ENCODE measurements at regions of chrX and their contacts with region 1.

Region 1: GRCh38 chrX:10169175-10169574 is 12.4 kb downstream of the CLCN4 start:
- DNase-seq: peak; percentile 61 to 63
- H3K4me3 ChIP-seq: no peak overlapping the region
- H3K4me3 Mint-ChIP-seq: peak overlapping the region; percentile 50
- H3K27ac Mint-ChIP-seq: peak overlapping the region; percentile 71
- H3K4me1 ChIP-seq: peaks cover 18% of the 10 kb centered on the region
- H3K4me1 Mint-ChIP-seq: peaks cover 23% of the 10 kb centered on the region
- H3K27me3 ChIP-seq: no peaks in the 10 kb centered on the region
- H3K27me3 Mint-ChIP-seq: no peaks in the 10 kb centered on the region
- CTCF ChIP-seq: no peak

Region 2: GRCh38 chrX:10133980-10134676 is 35.0 kb before region 1 on chrX:
- CTCF ChIA-PET with region 1: no interaction called
- POLR2A ChIA-PET with region 1: no interaction called
- intact Hi-C with region 1: loop called (anchors 1 kb)
- DNase-seq: peak; percentile 67 to 68
- H3K4me3 ChIP-seq: no peak overlapping the region; the same call in 1 of the 2 replicates
- H3K4me3 Mint-ChIP-seq: peak overlapping the region; percentile 50
- H3K27ac Mint-ChIP-seq: peak overlapping the region; percentile 91
- H3K4me1 ChIP-seq: peaks cover 16% of the 10 kb centered on the region
- H3K4me1 Mint-ChIP-seq: no peaks in the 10 kb centered on the region
- H3K27me3 ChIP-seq: no peaks in the 10 kb centered on the region
- H3K27me3 Mint-ChIP-seq: no peaks in the 10 kb centered on the region
- CTCF ChIP-seq: no peak

Region 3: DNA sequence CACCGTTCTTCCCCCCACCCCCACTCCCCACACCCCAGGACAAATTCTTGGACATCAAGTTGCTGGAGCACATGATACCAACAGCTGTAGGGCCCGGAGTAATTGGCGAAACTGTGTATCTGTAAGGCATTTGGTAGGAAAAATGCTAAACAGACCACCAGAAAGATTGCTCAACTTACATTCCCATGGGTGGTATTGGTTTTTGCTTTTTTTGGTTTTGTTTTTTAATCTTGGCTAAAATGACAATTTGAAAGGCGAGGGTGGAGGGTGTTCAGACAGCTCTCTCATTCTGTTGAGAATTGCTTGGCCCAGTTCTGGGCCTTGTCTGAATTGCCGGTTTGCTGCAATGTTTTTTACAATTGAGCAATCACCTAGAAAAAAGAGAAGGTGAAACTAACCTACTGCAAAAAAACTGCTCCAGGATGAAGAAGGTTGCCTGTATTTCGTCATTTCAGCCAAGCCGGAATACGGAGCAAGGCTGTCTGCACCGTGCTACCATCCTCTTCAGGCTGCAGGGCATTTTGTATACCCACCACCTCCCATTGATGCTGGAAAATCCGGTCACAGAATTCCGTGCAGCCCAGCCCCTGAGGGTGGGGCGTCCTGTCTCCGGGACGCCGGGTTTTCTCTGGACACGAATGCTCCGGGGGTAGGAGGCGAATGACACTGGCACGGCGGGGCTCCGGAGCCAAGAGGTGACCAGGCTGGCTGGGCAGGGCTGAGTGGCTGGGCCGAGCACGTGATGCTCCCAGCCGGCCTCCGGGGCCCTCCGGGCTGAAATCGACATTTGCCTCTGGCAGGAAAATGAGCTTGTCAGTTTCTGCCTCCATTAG is 12.8 kb before region 1 on chrX and contains the start of gene CLCN4:
- CTCF ChIA-PET with region 1: interaction called, 3 read pairs
- POLR2A ChIA-PET with region 1: no interaction called
- intact Hi-C with region 1: loop called (anchors 1 kb)
- DNase-seq: peak; percentile 78 to 79
- H3K4me3 ChIP-seq: peak within 1 kb of the TSS; percentile 26
- H3K4me3 Mint-ChIP-seq: peak within 1 kb of the TSS; percentile 70
- H3K27ac Mint-ChIP-seq: peak within 1 kb of the TSS; percentile 76
- H3K4me1 ChIP-seq: peaks cover 8% of the 10 kb centered on the region; the same call in 1 of the 2 replicates
- H3K4me1 Mint-ChIP-seq: peaks cover 12% of the 10 kb centered on the region
- H3K27me3 ChIP-seq: no peaks in the 10 kb centered on the region
- H3K27me3 Mint-ChIP-seq: no peaks in the 10 kb centered on the region
- CTCF ChIP-seq: no peak
- total RNA-seq, gene CLCN4: 10.0 and 11.1 TPM in 2 replicates